ENCODE measurements at regions of chr3 and their contacts with region 1.

Region 1: GRCh38 chr3:82133070-82133606 is 371.7 kb upstream of the GBE1 start:
- DNase-seq: no peak
- ATAC-seq: peak; percentile 81
- H3K4me3 Mint-ChIP-seq: no peak overlapping the region
- H3K27ac Mint-ChIP-seq: no peak overlapping the region
- H3K4me1 Mint-ChIP-seq: peaks cover 11% of the 10 kb centered on the region
- H3K27me3 Mint-ChIP-seq: no peaks in the 10 kb centered on the region
- CTCF ChIP-seq: peak; percentile 37

Region 2: GRCh38 chr3:81419228-81419627 is 713.9 kb before region 1 on chr3:
- CTCF ChIA-PET with region 1: no interaction called
- POLR2A ChIA-PET with region 1: no interaction called
- intact Hi-C with region 1: loop called (anchors 2 kb)
- DNase-seq: no peak
- ATAC-seq: no peak
- H3K4me3 Mint-ChIP-seq: no peak overlapping the region
- H3K27ac Mint-ChIP-seq: no peak overlapping the region
- H3K4me1 Mint-ChIP-seq: no peaks in the 10 kb centered on the region
- H3K27me3 Mint-ChIP-seq: no peaks in the 10 kb centered on the region
- CTCF ChIP-seq: no peak

Region 3: GRCh38 chr3:81490541-81491288 is 642.4 kb before region 1 on chr3:
- CTCF ChIA-PET with region 1: interaction called, 20 read pairs
- POLR2A ChIA-PET with region 1: no interaction called
- intact Hi-C with region 1: loop called (anchors 1 kb)
- DNase-seq: peak; percentile 20
- ATAC-seq: peak; percentile 73
- H3K4me3 Mint-ChIP-seq: no peak overlapping the region
- H3K27ac Mint-ChIP-seq: no peak overlapping the region
- H3K4me1 Mint-ChIP-seq: peaks cover 3% of the 10 kb centered on the region
- H3K27me3 Mint-ChIP-seq: no peaks in the 10 kb centered on the region
- CTCF ChIP-seq: peak; percentile 82

Region 4: DNA sequence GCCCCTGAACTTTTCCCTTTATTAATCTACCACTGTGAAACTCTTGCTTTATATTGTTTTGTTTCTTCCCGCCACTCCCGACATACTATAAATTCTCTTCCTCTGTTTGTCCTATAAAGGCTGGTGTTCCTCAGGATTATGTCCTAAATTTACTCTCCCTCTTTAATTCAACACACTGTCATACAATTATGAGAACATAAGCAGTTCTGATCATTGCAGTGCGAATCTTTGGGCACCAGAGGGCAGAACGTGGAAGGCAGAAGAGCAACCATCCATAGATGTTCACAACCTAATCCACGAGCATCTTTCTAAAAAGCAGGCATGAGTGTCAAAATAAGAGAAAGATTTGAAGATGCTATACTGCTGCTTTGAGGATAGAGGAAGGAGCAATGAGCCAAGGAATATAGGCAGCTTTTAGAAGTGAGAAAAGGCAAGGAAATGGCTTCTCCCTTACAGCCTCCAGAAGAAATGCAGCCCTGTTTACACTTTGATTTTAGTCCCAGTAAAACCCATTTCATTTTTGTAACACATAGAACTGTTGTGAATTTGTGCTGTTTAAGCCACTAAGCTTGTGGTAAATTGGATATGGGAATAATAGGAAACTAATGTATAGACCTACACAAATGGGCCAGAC is 551.1 kb before region 1 on chr3:
- CTCF ChIA-PET with region 1: interaction called, 8 read pairs
- POLR2A ChIA-PET with region 1: no interaction called
- intact Hi-C with region 1: loop called (anchors 1 kb)
- DNase-seq: no peak
- ATAC-seq: no peak
- H3K4me3 Mint-ChIP-seq: no peak overlapping the region
- H3K27ac Mint-ChIP-seq: no peak overlapping the region
- H3K4me1 Mint-ChIP-seq: no peaks in the 10 kb centered on the region
- H3K27me3 Mint-ChIP-seq: no peaks in the 10 kb centered on the region
- CTCF ChIP-seq: no peak

Region 5: DNA sequence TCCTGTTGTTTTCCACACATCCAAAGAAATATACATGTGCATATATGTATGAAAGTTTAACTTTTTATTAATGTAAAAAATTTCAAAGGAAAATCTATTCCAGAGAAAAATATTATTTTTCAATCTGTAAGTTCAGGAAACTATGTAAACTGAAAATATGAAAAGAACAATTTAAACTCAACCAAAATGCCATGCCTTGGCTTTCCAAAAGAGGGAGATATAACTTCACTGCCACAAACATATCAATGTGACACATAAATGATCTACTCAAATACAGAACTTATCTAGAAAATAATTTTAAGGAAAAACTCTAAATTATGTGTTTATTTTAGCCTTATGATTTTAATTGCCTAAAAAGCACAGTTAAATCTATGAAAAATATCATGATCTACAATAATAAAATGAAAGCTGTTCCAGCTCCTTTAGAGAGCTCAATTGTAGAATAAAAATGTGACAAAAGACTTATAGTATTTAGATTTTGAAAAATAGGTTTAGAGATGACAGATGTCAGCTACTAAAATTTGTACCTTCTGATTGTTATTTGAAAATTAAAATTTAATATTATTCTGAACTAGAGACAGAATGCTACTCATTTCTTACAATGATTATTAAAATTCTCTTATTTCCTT is 466.5 kb before region 1 on chr3:
- CTCF ChIA-PET with region 1: interaction called, 10 read pairs
- POLR2A ChIA-PET with region 1: no interaction called
- intact Hi-C with region 1: loop called (anchors 1 kb)
- DNase-seq: no peak
- ATAC-seq: no peak
- H3K4me3 Mint-ChIP-seq: no peak overlapping the region
- H3K27ac Mint-ChIP-seq: no peak overlapping the region
- H3K4me1 Mint-ChIP-seq: no peaks in the 10 kb centered on the region
- H3K27me3 Mint-ChIP-seq: no peaks in the 10 kb centered on the region
- CTCF ChIP-seq: no peak

Region 6: GRCh38 chr3:81760924-81761903 is 371.9 kb before region 1 on chr3 and contains the start of gene GBE1:
- CTCF ChIA-PET with region 1: no interaction called
- POLR2A ChIA-PET with region 1: no interaction called
- intact Hi-C with region 1: loop called (anchors 2 kb)
- DNase-seq: peak; percentile 93
- ATAC-seq: peak; percentile 85
- H3K4me3 Mint-ChIP-seq: peak within 1 kb of the TSS; percentile 98
- H3K27ac Mint-ChIP-seq: peak within 1 kb of the TSS; percentile 99
- H3K4me1 Mint-ChIP-seq: peaks cover 35% of the 10 kb centered on the region
- H3K27me3 Mint-ChIP-seq: no peaks in the 10 kb centered on the region
- CTCF ChIP-seq: no peak
- total RNA-seq, gene GBE1: 32.5 and 33.8 TPM in 2 replicates

Region 7: GRCh38 chr3:81910244-81910852 is 222.8 kb before region 1 on chr3:
- CTCF ChIA-PET with region 1: interaction called, 3 read pairs
- POLR2A ChIA-PET with region 1: no interaction called
- intact Hi-C with region 1: loop called (anchors 1 kb)
- DNase-seq: no peak
- ATAC-seq: peak; percentile 42
- H3K4me3 Mint-ChIP-seq: no peak overlapping the region
- H3K27ac Mint-ChIP-seq: no peak overlapping the region
- H3K4me1 Mint-ChIP-seq: no peaks in the 10 kb centered on the region
- H3K27me3 Mint-ChIP-seq: peaks cover 2% of the 10 kb centered on the region
- CTCF ChIP-seq: peak; percentile 57